Calu3 (cell line): ENCODE measurements at regions of chr5 and their contacts with region 1.

Region 1: DNA sequence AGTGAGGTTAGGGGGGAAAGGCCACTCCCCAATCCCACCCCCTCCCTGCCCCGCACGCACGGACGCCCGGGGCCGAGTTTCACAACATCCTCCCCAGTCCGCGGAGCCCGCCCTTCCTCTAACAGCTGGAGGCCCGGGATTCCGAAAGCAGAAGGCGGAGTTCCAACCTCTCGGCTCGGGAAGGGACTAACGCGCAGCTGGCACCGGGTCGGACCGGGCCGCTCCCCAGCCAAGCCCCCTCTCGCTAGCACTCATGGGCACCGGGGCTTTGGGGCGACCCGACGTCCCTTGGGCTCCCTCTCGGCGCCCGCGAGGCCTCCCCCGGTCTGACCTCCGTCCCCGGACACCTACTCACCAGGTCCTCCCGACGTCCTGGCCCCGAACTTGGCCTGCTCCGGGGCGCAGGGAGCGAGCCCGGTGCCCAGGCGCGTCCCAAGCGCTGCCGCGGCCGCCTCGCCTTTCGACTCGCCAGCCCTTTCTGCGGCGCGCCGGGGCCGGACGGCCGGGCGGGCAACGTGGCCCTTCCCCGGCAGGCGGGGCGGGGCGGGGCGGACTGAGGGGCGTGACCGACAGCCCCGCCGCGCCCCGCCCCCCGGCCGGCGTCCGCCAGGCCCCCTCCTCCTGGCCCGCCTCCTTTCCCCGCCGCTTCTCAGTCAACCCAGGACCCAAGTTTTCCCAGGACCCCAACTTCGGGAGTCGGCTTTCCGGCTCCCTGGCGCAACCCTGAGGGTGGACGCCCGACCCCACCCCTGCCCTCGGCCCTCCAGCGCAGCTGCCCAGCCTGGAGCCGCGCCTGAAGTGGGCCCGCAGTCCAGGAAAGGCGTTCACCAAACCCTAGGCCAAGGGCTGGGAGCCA is at the start of gene MGAT1:
- DNase-seq: peak; percentile 94
- H3K4me3 Mint-ChIP-seq: peak within 1 kb of the TSS; percentile 79
- H3K27ac Mint-ChIP-seq: peak within 1 kb of the TSS; percentile 82
- H3K4me1 Mint-ChIP-seq: peaks cover 66% of the 10 kb centered on the region
- H3K27me3 Mint-ChIP-seq: no peaks in the 10 kb centered on the region
- CTCF ChIP-seq: no peak
- total RNA-seq, gene MGAT1: 77.5 and 86.4 TPM in 2 replicates

Region 2: GRCh38 chr5:180067986-180068385 is 734.6 kb before region 1 on chr5:
- CTCF ChIA-PET with region 1: no interaction called
- intact Hi-C with region 1: no loop called
- DNase-seq: no peak
- H3K4me3 Mint-ChIP-seq: no peak overlapping the region
- H3K27ac Mint-ChIP-seq: no peak overlapping the region
- H3K4me1 Mint-ChIP-seq: peaks cover 8% of the 10 kb centered on the region
- H3K27me3 Mint-ChIP-seq: peaks cover under 1% of the 10 kb centered on the region
- CTCF ChIP-seq: no peak

Region 3: GRCh38 chr5:180499684-180500083 is 302.9 kb before region 1 on chr5:
- CTCF ChIA-PET with region 1: no interaction called
- intact Hi-C with region 1: no loop called
- DNase-seq: no peak
- H3K4me3 Mint-ChIP-seq: no peak overlapping the region
- H3K27ac Mint-ChIP-seq: no peak overlapping the region
- H3K4me1 Mint-ChIP-seq: peaks cover 17% of the 10 kb centered on the region
- H3K27me3 Mint-ChIP-seq: no peaks in the 10 kb centered on the region
- CTCF ChIP-seq: no peak

Region 4: GRCh38 chr5:180658774-180659564 is 143.6 kb before region 1 on chr5:
- CTCF ChIA-PET with region 1: no interaction called
- intact Hi-C with region 1: no loop called
- DNase-seq: no peak
- H3K4me3 Mint-ChIP-seq: no peak overlapping the region
- H3K27ac Mint-ChIP-seq: no peak overlapping the region
- H3K4me1 Mint-ChIP-seq: no peaks in the 10 kb centered on the region
- H3K27me3 Mint-ChIP-seq: peaks cover 78% of the 10 kb centered on the region
- CTCF ChIP-seq: no peak

Region 5: GRCh38 chr5:180755601-180756000 is 47.0 kb before region 1 on chr5:
- CTCF ChIA-PET with region 1: no interaction called
- intact Hi-C with region 1: loop called (anchors 1 kb)
- DNase-seq: no peak
- H3K4me3 Mint-ChIP-seq: no peak overlapping the region
- H3K27ac Mint-ChIP-seq: no peak overlapping the region
- H3K4me1 Mint-ChIP-seq: no peaks in the 10 kb centered on the region
- H3K27me3 Mint-ChIP-seq: peaks cover 32% of the 10 kb centered on the region
- CTCF ChIP-seq: no peak

Region 6: GRCh38 chr5:180860887-180861822 is 58.6 kb after region 1 on chr5 and contains the start of gene ZFP62:
- CTCF ChIA-PET with region 1: no interaction called
- intact Hi-C with region 1: loop called (anchors 5 kb)
- DNase-seq: peak; percentile 95
- H3K4me3 Mint-ChIP-seq: peak within 1 kb of the TSS; percentile 90
- H3K27ac Mint-ChIP-seq: peak within 1 kb of the TSS; percentile 83
- H3K4me1 Mint-ChIP-seq: peaks cover 26% of the 10 kb centered on the region
- H3K27me3 Mint-ChIP-seq: no peaks in the 10 kb centered on the region
- CTCF ChIP-seq: no peak
- total RNA-seq, gene ZFP62: 43.5 and 46.4 TPM in 2 replicates